HepG2 (cell line): ENCODE measurements at regions of chr3 and their contacts with region 1.

Region 1: DNA sequence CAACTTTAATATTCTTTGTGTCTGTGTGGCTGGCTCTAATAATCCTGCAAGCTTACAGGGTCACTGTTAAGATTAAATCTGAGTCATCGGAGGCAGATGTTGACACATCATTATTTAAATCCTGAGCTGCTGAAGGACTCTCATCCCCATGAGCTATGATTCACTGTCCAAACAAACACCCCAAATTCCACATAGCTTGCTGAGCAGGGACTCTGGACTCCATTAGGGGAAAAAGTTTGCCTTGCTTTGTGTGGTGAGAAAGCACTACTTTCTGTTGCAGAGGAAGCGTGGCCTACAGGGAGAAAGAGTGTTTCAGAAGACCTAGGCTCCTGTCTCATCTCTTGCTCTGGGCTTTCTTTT is 213.7 kb downstream of the PDCD6IP start:
- DNase-seq: peak; percentile 99
- ATAC-seq: peak; percentile 98
- H3K4me3 ChIP-seq: peak overlapping the region in 2 of 3 experiments; percentile 20 to 39; a peak in 1 of 6 replicates
- H3K27ac ChIP-seq: peak overlapping the region; percentile 87
- H3K4me1 ChIP-seq: peaks cover 70% of the 10 kb centered on the region
- H3K27me3 ChIP-seq: no peaks in the 10 kb centered on the region
- CTCF ChIP-seq: 0 out of 2 replicates have a peak, but pooled peaks have one; percentile 7
- EP300 ChIP-seq: peak; percentile 67 to 93; a peak in 3 of 4 replicates
- POLR2A ChIP-seq: peak in 1 of 2 experiments; percentile 68; a peak in 2 of 4 replicates
- RAD21 ChIP-seq: no peak

Region 2: GRCh38 chr3:33883538-33883950 is 128.5 kb before region 1 on chr3:
- CTCF ChIA-PET with region 1: interaction called, 4 read pairs
- POLR2A ChIA-PET with region 1: no interaction called
- in situ Hi-C with region 1: loop called (anchors 5 kb)
- intact Hi-C with region 1: loop called (anchors 1 kb)
- DNase-seq: peak; percentile 39
- ATAC-seq: peak; percentile 30
- H3K4me3 ChIP-seq: 0 out of 6 replicates have a peak overlapping the region, but pooled peaks of 1 of the 3 experiments have one; percentile 13
- H3K27ac ChIP-seq: no peak overlapping the region
- H3K4me1 ChIP-seq: peaks cover 12% of the 10 kb centered on the region
- H3K27me3 ChIP-seq: 0 out of 5 replicates have a peak, but pooled peaks cover 0 to 4% of the 10 kb centered on the region in 2 experiments
- CTCF ChIP-seq: peak; percentile 69
- EP300 ChIP-seq: no peak; a peak in 1 of 4 replicates
- POLR2A ChIP-seq: no peak
- RAD21 ChIP-seq: no peak

Region 3: DNA sequence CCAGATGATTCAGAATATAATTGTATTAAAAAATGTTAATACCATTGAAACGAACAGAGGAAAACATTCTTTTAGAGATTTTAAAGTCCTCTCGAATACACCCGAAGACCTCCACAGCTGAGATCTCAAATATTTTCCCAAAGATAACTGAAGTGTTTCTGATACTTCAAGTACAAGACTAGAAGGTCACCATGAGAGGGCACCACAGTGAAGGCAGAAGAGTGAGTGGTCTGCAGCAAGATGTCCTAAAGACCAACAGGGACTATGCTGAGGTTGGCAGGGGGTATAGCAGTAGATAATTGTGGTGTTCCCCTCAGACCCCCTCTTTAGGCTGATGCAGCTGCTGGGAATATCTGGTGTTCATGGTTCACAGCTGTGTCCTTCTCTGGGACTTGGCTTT is 57.1 kb before region 1 on chr3:
- CTCF ChIA-PET with region 1: interaction called, 3 read pairs
- POLR2A ChIA-PET with region 1: no interaction called
- in situ Hi-C with region 1: no loop called
- intact Hi-C with region 1: loop called (anchors 1 kb)
- DNase-seq: peak; percentile 37
- ATAC-seq: peak; percentile 82
- H3K4me3 ChIP-seq: no peak overlapping the region
- H3K27ac ChIP-seq: no peak overlapping the region
- H3K4me1 ChIP-seq: no peaks in the 10 kb centered on the region
- H3K27me3 ChIP-seq: peaks cover 0 to 3% of the 10 kb centered on the region in 2 experiments; a peak in 1 of 5 replicates
- CTCF ChIP-seq: peak; percentile 76
- EP300 ChIP-seq: no peak
- POLR2A ChIP-seq: no peak
- RAD21 ChIP-seq: peak; percentile 46

Region 4: DNA sequence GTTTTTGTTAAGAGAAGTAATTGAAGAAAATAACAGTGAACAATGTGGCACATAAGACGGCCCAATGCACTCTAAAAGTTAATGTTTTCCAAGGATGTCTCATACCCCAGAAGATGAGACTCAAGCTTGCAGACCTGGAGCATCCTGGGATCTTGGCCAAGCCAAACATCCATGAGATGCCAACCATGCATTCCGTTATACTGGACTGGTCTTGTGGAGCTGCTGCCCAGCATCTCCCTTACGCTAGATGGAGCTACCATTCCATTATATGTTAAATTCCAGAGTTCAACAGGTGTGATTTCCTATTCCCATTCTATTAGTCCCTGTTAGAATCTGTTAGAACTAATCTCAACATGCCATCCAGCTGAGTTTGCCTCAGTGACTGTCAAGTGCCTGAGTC is 31.8 kb before region 1 on chr3:
- CTCF ChIA-PET with region 1: interaction called, 21 read pairs
- POLR2A ChIA-PET with region 1: interaction called, 5 read pairs
- in situ Hi-C with region 1: no loop called
- intact Hi-C with region 1: loop called (anchors 1 kb)
- DNase-seq: peak; percentile 66
- ATAC-seq: peak; percentile 99
- H3K4me3 ChIP-seq: no peak overlapping the region
- H3K27ac ChIP-seq: no peak overlapping the region
- H3K4me1 ChIP-seq: no peaks in the 10 kb centered on the region
- H3K27me3 ChIP-seq: no peaks in the 10 kb centered on the region
- CTCF ChIP-seq: peak; percentile 86
- EP300 ChIP-seq: no peak
- POLR2A ChIP-seq: no peak
- RAD21 ChIP-seq: peak; percentile 82

Region 5: GRCh38 chr3:34000301-34000700 is 11.8 kb before region 1 on chr3:
- CTCF ChIA-PET with region 1: no interaction called
- POLR2A ChIA-PET with region 1: interaction called, 12 read pairs
- in situ Hi-C with region 1: no loop called
- intact Hi-C with region 1: loop called (anchors 1 kb)
- DNase-seq: no peak
- ATAC-seq: no peak; the same call in 2 of the 3 replicates
- H3K4me3 ChIP-seq: no peak overlapping the region
- H3K27ac ChIP-seq: no peak overlapping the region
- H3K4me1 ChIP-seq: peaks cover 61% of the 10 kb centered on the region
- H3K27me3 ChIP-seq: no peaks in the 10 kb centered on the region
- CTCF ChIP-seq: no peak
- EP300 ChIP-seq: no peak
- POLR2A ChIP-seq: no peak
- RAD21 ChIP-seq: no peak